Activated CD4-positive, alpha-beta T cell treated with anti-CD3 and anti-CD28 coated beads, Interleukin-2, amount 10 ng/mL, durations not matched to agents 24 days and 14 days (primary cell): ENCODE measurements at regions of chr11 and their contacts with region 1.

Region 1: GRCh38 chr11:102577182-102577581 is 46.6 kb upstream of the MMP7 start:
- DNase-seq: no peak
- H3K4me3 Mint-ChIP-seq: no peak overlapping the region
- H3K27ac Mint-ChIP-seq: no peak overlapping the region
- H3K4me1 Mint-ChIP-seq: peaks cover 35% of the 10 kb centered on the region
- H3K27me3 Mint-ChIP-seq: no peaks in the 10 kb centered on the region

Region 2: DNA sequence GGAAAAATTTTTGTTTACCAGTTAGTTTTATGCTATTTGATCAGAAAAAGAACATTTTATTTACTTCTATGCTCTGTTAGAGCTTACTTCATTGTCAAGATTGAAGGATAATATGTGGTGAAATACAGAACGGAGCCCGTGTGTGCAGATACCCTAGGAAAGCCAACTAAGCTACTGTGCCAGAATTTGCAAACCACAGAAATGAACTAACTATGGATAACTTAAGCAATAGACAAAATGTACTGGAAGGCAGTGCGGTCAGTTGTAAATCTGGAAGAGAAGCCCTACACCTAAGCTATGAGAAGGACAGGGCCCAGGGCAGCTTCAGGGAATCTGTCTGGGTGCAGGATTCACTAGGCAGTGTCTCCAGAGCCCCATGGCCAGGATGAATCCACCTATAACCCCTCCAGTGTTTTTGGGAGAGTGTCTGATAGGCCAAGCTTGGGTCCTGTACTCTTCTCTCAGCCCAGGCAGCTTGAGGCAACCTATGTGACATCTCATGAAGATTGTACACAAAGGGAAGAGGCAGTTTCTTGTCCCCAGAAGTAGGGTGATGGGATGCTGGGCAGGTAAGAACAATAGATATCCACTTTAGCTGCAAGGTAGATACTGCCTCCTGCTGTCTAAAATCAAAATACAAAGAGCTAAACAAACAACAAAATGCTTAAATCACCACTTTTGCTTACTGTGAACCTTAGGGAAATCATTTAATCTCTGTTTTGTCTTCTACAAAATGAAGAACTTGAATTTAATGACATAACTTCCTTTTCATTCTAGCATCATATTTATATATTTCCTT is 58.7 kb before region 1 on chr11:
- intact Hi-C with region 1: no loop called
- DNase-seq: no peak
- H3K4me3 Mint-ChIP-seq: no peak overlapping the region
- H3K27ac Mint-ChIP-seq: no peak overlapping the region
- H3K4me1 Mint-ChIP-seq: no peaks in the 10 kb centered on the region
- H3K27me3 Mint-ChIP-seq: peaks cover 20% of the 10 kb centered on the region

Region 3: GRCh38 chr11:102560555-102561011 is 16.6 kb before region 1 on chr11:
- intact Hi-C with region 1: loop called (anchors 1 kb)
- DNase-seq: peak; percentile 73
- H3K4me3 Mint-ChIP-seq: peak overlapping the region; percentile 52
- H3K27ac Mint-ChIP-seq: peak overlapping the region; percentile 78
- H3K4me1 Mint-ChIP-seq: peaks cover 39% of the 10 kb centered on the region
- H3K27me3 Mint-ChIP-seq: peaks cover 2% of the 10 kb centered on the region

Region 4: GRCh38 chr11:102589047-102589459 is 11.9 kb after region 1 on chr11:
- intact Hi-C with region 1: loop called (anchors 1 kb)
- DNase-seq: peak; percentile 67
- H3K4me3 Mint-ChIP-seq: peak overlapping the region; percentile 0
- H3K27ac Mint-ChIP-seq: peak overlapping the region; percentile 42
- H3K4me1 Mint-ChIP-seq: peaks cover 26% of the 10 kb centered on the region
- H3K27me3 Mint-ChIP-seq: no peaks in the 10 kb centered on the region